Activated CD4-positive, alpha-beta T cell treated with anti-CD3 and anti-CD28 coated beads for 36 hours (primary cell): ENCODE measurements at regions of chr9 and their contacts with region 1.

Region 1: GRCh38 chr9:34072868-34073590 is 24.3 kb upstream of the UBAP2 start:
- DNase-seq: no peak
- ATAC-seq: no peak
- H3K4me3 Mint-ChIP-seq: no peak overlapping the region
- H3K27ac Mint-ChIP-seq: no peak overlapping the region
- H3K4me1 Mint-ChIP-seq: no peaks in the 10 kb centered on the region
- H3K27me3 Mint-ChIP-seq: no peaks in the 10 kb centered on the region

Region 2: DNA sequence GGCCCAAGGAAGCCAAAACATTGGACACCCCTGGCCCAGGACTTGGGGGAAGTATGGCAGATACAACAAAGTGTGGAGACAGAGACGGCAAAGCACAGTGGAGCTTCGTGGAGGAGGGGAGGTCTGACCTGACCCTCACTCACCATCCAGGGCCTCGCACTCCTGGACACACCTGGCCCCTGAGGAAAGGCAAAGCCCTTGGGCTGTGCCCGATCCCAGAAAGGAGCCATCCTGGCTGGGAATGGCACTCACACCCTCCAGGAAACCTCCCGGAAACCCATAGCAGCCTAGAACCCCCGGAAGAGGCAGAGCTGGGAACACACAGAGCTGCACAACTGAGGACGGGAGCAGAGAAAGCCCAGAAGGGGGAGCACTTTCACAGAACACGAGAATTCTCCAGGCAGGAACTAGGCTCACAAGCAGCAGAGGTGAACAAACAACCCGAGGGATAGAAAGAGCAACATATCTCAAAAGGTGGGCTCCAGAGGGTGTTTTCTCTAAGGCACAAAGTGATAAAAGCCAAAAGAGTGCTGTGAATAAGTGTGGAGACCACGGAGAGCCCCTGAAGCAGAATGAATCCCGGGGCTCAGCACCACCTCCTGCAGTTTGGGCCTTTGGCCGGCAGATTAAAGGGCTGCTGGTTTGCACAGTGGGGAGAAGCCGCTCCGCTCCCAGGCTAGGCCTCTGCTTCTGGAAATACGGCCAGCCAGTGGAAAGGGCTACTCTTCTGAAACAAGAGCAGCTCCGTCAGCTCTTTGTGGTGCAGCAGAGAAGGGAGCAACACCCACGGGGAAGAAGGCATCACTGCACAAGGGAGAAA is 147.8 kb before region 1 on chr9:
- CTCF ChIA-PET with region 1: interaction called, 5 read pairs
- POLR2A ChIA-PET with region 1: no interaction called
- intact Hi-C with region 1: loop called in 1 of 2 experiments (anchors 1 kb)
- DNase-seq: peak; percentile 55
- ATAC-seq: peak; percentile 45
- H3K4me3 Mint-ChIP-seq: no peak overlapping the region
- H3K27ac Mint-ChIP-seq: no peak overlapping the region
- H3K4me1 Mint-ChIP-seq: no peaks in the 10 kb centered on the region
- H3K27me3 Mint-ChIP-seq: no peaks in the 10 kb centered on the region

Region 3: GRCh38 chr9:34010979-34011378 is 62.0 kb before region 1 on chr9:
- CTCF ChIA-PET with region 1: interaction called, 4 read pairs
- POLR2A ChIA-PET with region 1: no interaction called
- intact Hi-C with region 1: loop called (anchors 2 to 10 kb)
- DNase-seq: no peak
- ATAC-seq: no peak
- H3K4me3 Mint-ChIP-seq: no peak overlapping the region
- H3K27ac Mint-ChIP-seq: no peak overlapping the region
- H3K4me1 Mint-ChIP-seq: no peaks in the 10 kb centered on the region
- H3K27me3 Mint-ChIP-seq: no peaks in the 10 kb centered on the region

Region 4: GRCh38 chr9:34084562-34084961 is 11.5 kb after region 1 on chr9:
- CTCF ChIA-PET with region 1: interaction called, 16 read pairs
- POLR2A ChIA-PET with region 1: no interaction called
- intact Hi-C with region 1: no loop called
- DNase-seq: no peak
- ATAC-seq: no peak
- H3K4me3 Mint-ChIP-seq: no peak overlapping the region
- H3K27ac Mint-ChIP-seq: peak overlapping the region; percentile 4
- H3K4me1 Mint-ChIP-seq: peaks cover 23% of the 10 kb centered on the region
- H3K27me3 Mint-ChIP-seq: no peaks in the 10 kb centered on the region

Region 5: DNA sequence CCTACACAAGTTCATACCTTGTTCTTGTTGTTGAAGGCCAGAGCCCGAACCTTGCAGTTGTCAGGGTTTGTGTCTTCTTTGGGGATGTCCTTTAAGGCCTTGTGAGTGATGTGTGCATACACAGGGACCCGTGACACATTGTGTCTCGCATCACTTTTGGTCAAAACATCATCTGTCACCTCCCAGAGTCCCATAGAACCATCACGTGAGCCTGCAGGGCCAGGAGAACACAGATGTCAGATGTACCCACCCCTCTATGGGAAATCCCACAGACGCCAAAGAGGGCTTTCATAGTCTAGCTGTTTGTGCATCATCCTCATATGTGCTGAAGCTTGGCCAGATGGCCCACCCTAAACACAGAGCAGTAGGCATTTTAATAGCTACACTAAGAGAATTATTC is 25.3 kb after region 1 on chr9:
- CTCF ChIA-PET with region 1: no interaction called
- POLR2A ChIA-PET with region 1: no interaction called
- intact Hi-C with region 1: no loop called
- DNase-seq: no peak
- ATAC-seq: no peak
- H3K4me3 Mint-ChIP-seq: no peak overlapping the region
- H3K27ac Mint-ChIP-seq: no peak overlapping the region
- H3K4me1 Mint-ChIP-seq: no peaks in the 10 kb centered on the region
- H3K27me3 Mint-ChIP-seq: no peaks in the 10 kb centered on the region

Region 6: DNA sequence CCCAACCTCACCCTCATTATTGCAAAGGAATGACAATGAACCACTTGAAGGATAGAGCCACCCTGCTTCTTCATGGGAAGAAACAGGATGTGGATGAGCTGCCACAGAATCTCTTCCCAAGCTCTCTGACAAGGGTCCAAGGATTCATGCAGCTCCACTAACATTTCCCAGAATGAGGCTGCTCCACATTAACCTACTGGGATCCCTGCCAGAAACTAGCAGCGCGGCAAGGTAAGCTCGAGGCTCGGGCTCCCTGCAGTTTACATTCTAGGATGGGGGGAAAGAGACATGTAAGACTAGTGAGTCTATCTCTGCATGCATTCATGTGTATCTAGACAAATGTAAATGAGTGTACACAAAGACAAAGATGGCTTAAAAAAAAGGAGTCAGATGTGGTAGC is 41.4 kb after region 1 on chr9:
- CTCF ChIA-PET with region 1: no interaction called
- POLR2A ChIA-PET with region 1: no interaction called
- intact Hi-C with region 1: no loop called
- DNase-seq: no peak
- ATAC-seq: no peak
- H3K4me3 Mint-ChIP-seq: no peak overlapping the region
- H3K27ac Mint-ChIP-seq: no peak overlapping the region
- H3K4me1 Mint-ChIP-seq: peaks cover 2% of the 10 kb centered on the region
- H3K27me3 Mint-ChIP-seq: no peaks in the 10 kb centered on the region

Region 7: GRCh38 chr9:34252670-34253459 is 179.8 kb after region 1 on chr9:
- CTCF ChIA-PET with region 1: interaction called, 26 read pairs
- POLR2A ChIA-PET with region 1: no interaction called
- intact Hi-C with region 1: loop called in 1 of 2 experiments (anchors 2 kb)
- DNase-seq: peak; percentile 82
- ATAC-seq: peak; percentile 84
- H3K4me3 Mint-ChIP-seq: no peak overlapping the region
- H3K27ac Mint-ChIP-seq: peak overlapping the region; percentile 8
- H3K4me1 Mint-ChIP-seq: peaks cover 21% of the 10 kb centered on the region
- H3K27me3 Mint-ChIP-seq: no peaks in the 10 kb centered on the region